PC-9 (cell line): ENCODE measurements at regions of chr16 and their contacts with region 1.

Region 1: GRCh38 chr16:31899505-31899904 is 25.9 kb downstream of the ZNF267 start:
- DNase-seq: no peak
- H3K4me3 ChIP-seq: no peak overlapping the region
- H3K27ac ChIP-seq: no peak overlapping the region
- H3K4me1 ChIP-seq: no peaks in the 10 kb centered on the region
- H3K27me3 ChIP-seq: no peaks in the 10 kb centered on the region
- CTCF ChIP-seq: no peak

Region 2: DNA sequence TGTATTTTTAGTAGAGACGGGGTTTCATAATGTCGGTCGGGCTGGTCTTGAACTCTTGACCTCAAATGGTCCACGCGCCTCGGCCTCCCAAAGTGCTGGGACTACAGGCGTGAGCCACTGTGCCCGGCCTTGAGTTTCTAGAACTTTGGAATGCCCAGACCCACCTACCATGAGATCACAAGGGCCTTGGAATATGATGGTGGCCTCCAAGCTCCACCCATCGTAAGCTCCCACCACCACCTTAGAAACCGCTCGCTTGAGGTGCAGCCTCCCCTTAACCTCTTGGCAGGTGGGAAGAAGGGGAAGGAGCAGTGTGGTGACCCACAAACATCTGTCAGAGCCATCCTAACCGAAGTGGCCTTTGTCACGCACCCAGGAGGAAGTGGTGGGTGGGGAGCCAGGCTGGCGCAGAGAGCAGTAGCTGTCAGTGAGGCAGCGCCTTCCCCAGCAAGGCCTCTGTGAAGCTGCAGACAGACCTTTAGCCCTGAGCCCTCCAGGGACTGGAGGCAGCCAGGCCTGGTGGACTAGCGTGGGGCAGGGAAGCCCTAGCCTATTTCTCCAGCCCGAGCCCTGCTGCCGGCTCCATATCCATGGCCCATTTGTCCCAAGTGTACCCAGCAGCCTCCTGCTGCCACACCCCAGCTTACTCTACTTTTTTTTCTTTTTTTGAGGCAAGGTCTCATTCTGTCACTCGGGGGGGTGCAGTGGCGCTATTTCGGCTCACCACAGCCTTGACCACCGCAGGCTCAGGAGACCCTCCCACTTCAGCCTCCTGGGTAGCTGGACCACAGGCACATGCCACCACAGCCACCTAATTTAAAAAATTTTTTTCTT is 1440.7 kb before region 1 on chr16:
- CTCF ChIA-PET with region 1: no interaction called
- POLR2A ChIA-PET with region 1: interaction called, 14 read pairs
- intact Hi-C with region 1: no loop called
- DNase-seq: no peak
- H3K4me3 ChIP-seq: no peak overlapping the region
- H3K27ac ChIP-seq: no peak overlapping the region
- H3K4me1 ChIP-seq: no peaks in the 10 kb centered on the region
- H3K27me3 ChIP-seq: no peaks in the 10 kb centered on the region
- CTCF ChIP-seq: no peak

Region 3: GRCh38 chr16:31888735-31889134 is 10.8 kb before region 1 on chr16:
- CTCF ChIA-PET with region 1: no interaction called
- POLR2A ChIA-PET with region 1: no interaction called
- intact Hi-C with region 1: no loop called
- DNase-seq: no peak
- H3K4me3 ChIP-seq: no peak overlapping the region
- H3K27ac ChIP-seq: no peak overlapping the region
- H3K4me1 ChIP-seq: no peaks in the 10 kb centered on the region
- H3K27me3 ChIP-seq: no peaks in the 10 kb centered on the region
- CTCF ChIP-seq: no peak